MCF 10A (cell line): ENCODE measurements at regions of chr3 and their contacts with region 1.

Region 1: DNA sequence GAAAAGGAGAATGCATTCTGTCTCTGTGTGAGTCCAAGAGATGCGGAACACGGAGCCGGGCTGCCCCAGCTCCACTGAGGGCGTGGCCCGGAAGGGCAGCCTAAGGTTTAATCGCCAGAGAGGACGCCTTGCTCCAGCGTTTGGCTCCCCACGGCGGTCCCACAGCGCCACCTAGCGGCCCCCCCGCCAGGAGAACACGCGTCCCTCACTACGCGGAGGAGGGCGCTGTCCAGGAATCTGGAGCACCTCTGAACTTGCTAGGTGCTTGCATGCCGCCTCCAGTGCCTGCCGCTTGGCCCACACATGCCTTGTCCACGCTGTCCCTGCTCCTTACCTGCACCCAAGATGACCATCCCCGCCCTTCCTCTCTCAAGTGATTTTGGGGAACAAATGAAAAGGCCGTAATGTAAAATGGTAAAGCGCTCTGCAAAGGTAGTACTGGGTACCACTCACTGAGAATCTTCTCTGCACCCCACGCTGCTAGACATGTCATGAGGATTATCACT is 14.4 kb upstream of the MRPS22 start:
- DNase-seq: peak; percentile 87
- H3K4me3 Mint-ChIP-seq: no peak overlapping the region
- H3K27ac Mint-ChIP-seq: no peak overlapping the region
- H3K4me1 Mint-ChIP-seq: peaks cover 8% of the 10 kb centered on the region
- H3K27me3 Mint-ChIP-seq: peaks cover 41% of the 10 kb centered on the region
- CTCF ChIP-seq: peak; percentile 99

Region 2: DNA sequence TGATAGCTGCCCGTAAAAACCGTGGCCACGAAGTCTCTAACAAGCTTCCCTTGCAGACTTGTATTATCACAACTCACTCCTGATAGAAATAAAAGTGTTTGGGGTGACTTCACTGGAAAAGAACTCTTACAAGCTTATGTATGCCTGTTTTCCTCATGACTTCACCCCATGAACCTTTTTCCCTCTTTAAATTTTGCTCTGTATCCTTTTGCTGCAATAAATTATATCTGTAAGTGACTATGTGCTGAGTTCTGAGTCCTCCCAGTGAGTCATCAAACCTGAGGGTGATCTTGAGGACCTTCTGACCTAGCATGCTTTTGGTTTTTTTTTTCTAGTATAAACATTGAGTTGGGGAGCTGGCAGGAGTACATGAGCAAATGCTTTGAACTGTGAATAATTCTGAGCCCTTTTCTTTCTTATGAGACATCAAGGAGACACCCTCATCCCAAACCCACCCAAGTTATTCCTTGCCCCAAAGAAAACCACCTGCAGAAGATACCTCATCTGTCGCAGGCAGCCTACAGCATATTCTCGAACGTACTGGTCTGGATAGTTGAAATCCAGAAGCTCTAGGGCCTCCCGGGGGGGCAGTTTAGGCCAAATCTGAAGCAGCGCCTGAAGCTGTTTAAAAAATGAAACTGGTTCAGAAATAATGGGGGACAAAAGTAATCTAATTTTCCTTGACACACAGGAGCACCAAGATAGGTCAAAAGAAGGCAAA is 635.0 kb before region 1 on chr3:
- CTCF ChIA-PET with region 1: no interaction called
- POLR2A ChIA-PET with region 1: no interaction called
- intact Hi-C with region 1: loop called (anchors 10 kb)
- DNase-seq: peak; percentile 80
- H3K4me3 Mint-ChIP-seq: peak overlapping the region; percentile 2
- H3K27ac Mint-ChIP-seq: peak overlapping the region; percentile 43
- H3K4me1 Mint-ChIP-seq: peaks cover 8% of the 10 kb centered on the region
- H3K27me3 Mint-ChIP-seq: no peaks in the 10 kb centered on the region
- CTCF ChIP-seq: no peak

Region 3: DNA sequence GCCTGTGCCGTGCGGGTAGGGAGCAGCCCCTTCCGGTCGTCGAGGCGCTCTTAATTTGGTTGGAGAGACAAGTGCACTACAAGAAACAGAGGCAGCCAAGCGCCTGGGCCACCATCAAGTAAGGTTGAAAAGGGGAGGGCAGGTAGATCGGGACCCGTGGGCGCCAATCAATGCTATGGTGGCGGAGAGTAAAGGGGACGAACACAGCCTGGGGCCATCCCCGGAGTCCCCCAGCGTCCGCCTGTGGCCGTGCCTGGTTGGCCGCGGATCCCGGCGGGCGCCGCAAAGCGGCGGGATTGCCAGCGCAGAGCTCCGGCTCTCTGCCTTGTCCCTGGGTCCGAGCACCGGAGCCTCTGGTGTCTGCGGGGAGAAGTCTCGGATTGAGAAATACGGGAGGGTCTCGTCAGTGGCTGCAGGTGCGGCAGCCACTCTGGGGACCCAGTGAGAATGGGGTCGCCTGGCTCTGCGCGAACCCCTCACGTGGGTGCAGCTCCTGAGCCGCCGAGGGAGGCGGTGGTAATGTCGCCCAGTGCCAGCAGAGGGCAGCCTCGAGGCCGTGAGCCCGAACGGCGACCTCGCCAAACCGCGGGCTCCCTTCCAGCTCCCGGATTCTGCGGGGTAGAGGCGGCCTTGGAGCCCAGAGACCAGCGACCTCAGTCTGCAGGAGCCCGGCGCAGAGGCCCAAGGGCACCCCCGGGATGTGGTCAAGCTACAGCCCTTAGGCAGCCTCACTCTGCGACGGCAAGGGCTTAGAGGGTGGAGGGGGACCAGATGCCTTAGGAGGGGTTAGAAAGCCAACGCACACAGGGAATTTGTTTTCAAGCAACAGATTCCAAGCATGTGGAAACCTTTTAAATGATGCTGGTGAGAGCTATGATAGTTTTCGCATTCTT is 393.3 kb before region 1 on chr3:
- CTCF ChIA-PET with region 1: interaction called, 29 read pairs
- POLR2A ChIA-PET with region 1: interaction called, 3 read pairs
- intact Hi-C with region 1: loop called (anchors 1 kb)
- DNase-seq: peak; percentile 59
- H3K4me3 Mint-ChIP-seq: peak overlapping the region; percentile 68
- H3K27ac Mint-ChIP-seq: no peak overlapping the region
- H3K4me1 Mint-ChIP-seq: no peaks in the 10 kb centered on the region
- H3K27me3 Mint-ChIP-seq: peaks cover 16% of the 10 kb centered on the region
- CTCF ChIP-seq: peak; percentile 84

Region 4: DNA sequence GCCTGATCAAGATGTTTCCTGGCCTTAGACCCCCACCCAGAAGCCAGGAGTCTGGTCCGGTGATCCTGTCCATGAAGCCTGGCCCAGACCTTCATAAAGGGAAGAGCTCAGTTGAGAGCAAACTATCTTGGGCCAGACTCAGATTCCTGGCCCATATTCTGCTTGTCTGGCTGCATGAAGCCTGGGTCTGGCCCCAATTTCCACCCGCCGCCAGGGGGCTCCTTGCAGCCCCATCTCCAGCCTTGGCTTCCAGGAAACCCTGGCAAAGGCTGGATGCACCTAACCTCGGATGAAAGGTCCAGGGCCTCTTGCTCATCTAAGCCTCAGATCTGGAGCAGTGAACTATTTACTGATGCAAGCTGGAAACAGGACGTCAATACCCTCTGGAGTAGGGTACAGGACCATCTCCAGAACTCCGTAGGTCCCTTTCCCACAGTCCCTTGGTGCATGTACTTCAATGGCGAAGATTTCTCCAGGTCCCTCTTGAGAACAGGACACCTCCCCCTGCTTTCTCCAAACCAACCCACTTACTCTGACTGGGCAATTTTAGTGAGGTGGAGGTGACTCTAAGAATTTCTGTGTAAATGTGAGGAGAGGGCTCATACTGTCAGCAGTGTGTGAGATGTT is 388.0 kb before region 1 on chr3:
- CTCF ChIA-PET with region 1: interaction called, 21 read pairs
- POLR2A ChIA-PET with region 1: interaction called, 3 read pairs
- intact Hi-C with region 1: loop called (anchors 1 kb)
- DNase-seq: peak; percentile 66
- H3K4me3 Mint-ChIP-seq: no peak overlapping the region
- H3K27ac Mint-ChIP-seq: no peak overlapping the region
- H3K4me1 Mint-ChIP-seq: no peaks in the 10 kb centered on the region
- H3K27me3 Mint-ChIP-seq: peaks cover 27% of the 10 kb centered on the region
- CTCF ChIP-seq: peak; percentile 53

Region 5: DNA sequence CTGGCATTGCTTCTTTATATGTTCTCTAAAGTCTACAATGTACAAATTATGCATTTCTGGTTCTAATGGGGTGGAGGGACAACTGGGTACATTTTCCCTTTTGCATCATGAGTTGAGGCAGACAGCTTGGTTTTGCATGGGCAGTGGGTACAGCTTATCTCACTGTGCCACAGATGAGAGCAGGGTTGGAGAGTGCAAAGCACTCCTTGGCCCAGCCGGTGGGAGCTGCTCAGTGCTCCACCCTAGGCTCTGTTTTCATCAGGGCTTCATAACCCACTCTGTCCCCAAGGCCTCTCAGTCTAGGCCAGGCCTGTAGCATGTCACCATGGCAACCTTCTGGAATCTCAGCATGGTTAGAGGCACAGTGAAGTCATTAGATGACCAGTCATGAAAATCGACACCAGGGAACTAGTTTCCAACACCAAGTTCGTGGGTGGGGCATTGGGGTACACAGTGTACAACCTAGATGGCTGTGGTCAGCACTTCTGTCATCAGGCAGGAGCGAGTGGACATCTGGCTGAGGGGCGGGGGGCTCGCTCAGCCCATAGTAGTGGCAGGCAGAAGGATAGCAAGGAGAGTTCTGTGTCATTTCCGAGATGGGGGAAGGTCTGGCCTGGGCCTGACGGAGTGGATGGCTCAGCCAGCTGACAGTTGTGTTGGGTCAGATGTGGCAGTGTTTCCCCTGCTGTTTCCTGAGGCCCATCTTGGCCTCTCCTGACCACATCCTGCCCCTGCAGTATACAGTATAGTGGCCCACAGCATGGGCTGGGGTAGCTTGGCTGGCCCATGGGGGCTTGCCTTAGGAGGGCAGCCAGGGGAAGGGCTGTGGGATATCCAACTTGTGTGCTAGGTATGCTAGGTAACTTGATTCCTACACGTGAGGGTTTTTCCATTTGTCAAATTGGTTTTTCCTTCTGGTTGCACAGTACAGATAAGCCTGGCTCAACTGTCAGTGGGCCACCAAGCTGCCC is 209.0 kb before region 1 on chr3:
- CTCF ChIA-PET with region 1: interaction called, 18 read pairs
- POLR2A ChIA-PET with region 1: no interaction called
- intact Hi-C with region 1: no loop called
- DNase-seq: peak; percentile 48
- H3K4me3 Mint-ChIP-seq: no peak overlapping the region
- H3K27ac Mint-ChIP-seq: no peak overlapping the region
- H3K4me1 Mint-ChIP-seq: peaks cover 12% of the 10 kb centered on the region
- H3K27me3 Mint-ChIP-seq: no peaks in the 10 kb centered on the region
- CTCF ChIP-seq: no peak

Region 6: DNA sequence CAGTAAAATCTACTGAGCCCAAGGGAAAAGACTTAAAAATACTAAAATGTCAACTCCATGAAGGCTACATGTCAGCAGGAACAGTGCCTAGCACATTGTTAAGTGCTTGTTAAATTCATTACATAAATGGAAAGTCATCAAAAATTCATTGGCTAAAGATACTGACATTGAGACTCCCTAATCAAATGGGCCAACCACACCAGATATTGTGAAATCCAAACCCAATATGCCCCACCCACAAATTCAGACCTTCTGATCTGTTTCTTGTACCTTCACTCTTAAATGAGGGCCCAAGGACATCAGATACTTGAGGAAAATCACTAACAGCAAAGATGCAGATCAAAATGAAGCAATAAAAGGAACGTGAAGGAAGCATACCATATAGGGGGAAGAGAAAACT is 35.2 kb after region 1 on chr3:
- CTCF ChIA-PET with region 1: no interaction called
- POLR2A ChIA-PET with region 1: no interaction called
- intact Hi-C with region 1: no loop called
- DNase-seq: no peak
- H3K4me3 Mint-ChIP-seq: no peak overlapping the region
- H3K27ac Mint-ChIP-seq: no peak overlapping the region
- H3K4me1 Mint-ChIP-seq: peaks cover 6% of the 10 kb centered on the region
- H3K27me3 Mint-ChIP-seq: no peaks in the 10 kb centered on the region
- CTCF ChIP-seq: no peak